ENCODE measurements at regions of chr5 and their contacts with region 1.

Region 1: DNA sequence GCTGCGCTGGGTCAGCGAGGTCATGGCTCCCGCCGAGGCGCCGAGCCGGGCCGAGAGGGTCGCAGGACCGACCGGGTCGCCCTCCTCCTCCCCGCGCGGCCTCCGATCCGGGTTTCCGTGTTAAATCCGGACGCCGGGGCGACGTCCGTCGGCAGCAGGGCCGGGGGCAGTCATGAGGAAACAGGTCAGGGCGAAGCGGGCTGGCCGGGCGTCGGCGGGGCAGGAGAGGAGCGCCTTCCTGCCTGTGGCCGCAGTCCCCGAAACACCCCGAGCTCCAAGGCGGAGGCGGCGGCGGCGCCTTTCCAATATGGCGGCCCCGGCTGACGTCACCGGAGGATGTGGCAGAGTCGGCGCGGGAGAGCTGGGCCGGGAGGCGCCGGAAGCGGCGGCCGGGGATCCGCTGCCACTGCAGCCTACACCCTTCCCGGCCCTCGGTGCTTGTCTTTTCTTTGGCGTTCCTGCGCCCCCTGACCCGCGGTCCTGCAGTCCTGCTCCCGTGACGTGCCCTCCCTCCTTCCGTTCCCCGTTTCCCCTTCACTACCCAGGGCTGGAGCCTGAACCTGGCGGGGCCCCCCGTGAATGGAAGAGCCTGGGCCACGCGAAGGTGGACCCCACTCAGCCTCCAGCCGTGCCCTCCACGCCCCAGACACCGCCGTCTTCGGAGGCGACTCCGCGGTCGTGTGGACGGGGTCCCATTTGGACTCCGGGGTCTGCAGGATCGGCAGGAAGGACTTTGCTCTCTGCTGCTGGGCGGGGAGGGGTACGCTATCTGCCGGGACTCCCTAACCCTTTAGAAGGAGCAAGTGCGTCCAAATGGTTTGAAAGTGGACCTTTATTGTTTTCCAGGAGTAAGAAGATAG is at the start of gene GOLPH3:
- DNase-seq: peak; percentile 86
- ATAC-seq: peak; percentile 89
- H3K4me3 Mint-ChIP-seq: peak within 1 kb of the TSS; percentile 96
- H3K27ac Mint-ChIP-seq: peak within 1 kb of the TSS; percentile 92
- H3K4me1 Mint-ChIP-seq: peaks cover 40% of the 10 kb centered on the region
- H3K27me3 Mint-ChIP-seq: no peaks in the 10 kb centered on the region
- CTCF ChIP-seq: no peak
- total RNA-seq, gene GOLPH3: 55.5 and 60.1 TPM in 2 replicates

Region 2: DNA sequence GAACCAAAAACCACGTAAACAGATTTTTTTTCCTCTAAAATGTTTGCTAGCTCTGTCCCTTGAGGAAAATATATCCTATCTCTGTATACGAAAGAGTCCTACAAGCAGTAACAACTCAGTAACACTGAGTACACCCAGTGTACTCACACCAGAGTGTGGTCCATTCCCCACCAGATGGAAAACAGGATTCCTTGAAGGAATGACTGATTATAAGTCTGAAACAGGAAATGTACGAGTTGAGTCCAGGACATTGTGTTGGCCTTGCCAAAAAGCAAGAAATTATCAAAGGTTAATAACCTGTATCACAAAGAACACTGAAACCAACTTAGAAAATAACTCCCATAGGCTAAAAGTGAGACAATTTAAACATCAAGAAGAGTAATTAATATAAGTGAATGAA is 20.5 kb before region 1 on chr5:
- CTCF ChIA-PET with region 1: no interaction called
- POLR2A ChIA-PET with region 1: interaction called, 4 read pairs
- intact Hi-C with region 1: loop called (anchors 2 kb)
- DNase-seq: no peak
- ATAC-seq: no peak
- H3K4me3 Mint-ChIP-seq: no peak overlapping the region
- H3K27ac Mint-ChIP-seq: no peak overlapping the region
- H3K4me1 Mint-ChIP-seq: peaks cover 51% of the 10 kb centered on the region
- H3K27me3 Mint-ChIP-seq: no peaks in the 10 kb centered on the region
- CTCF ChIP-seq: no peak

Region 3: DNA sequence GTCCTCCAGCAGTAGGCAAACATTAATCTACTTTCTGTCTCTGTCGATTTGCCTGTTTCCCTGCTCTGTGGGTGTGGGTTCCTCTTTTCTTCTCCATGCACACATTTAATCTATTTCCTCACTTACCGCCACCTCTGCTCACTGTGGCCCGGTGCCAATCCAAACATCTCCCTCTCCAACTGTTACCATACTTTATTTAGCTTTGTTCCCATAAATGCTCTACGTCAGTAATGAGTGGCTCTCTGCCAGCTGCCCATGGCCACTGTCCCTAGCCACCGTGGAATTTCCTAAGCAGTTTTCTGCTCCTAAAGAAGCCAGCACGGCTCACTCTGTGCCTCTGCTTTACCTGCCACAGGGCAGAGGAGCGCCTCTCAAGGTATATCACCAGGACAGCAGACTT is 19.4 kb after region 1 on chr5:
- CTCF ChIA-PET with region 1: no interaction called
- POLR2A ChIA-PET with region 1: interaction called, 3 read pairs
- intact Hi-C with region 1: loop called (anchors 2 kb)
- DNase-seq: no peak
- ATAC-seq: peak; percentile 77
- H3K4me3 Mint-ChIP-seq: peak overlapping the region; percentile 64
- H3K27ac Mint-ChIP-seq: peak overlapping the region; percentile 2
- H3K4me1 Mint-ChIP-seq: peaks cover 11% of the 10 kb centered on the region
- H3K27me3 Mint-ChIP-seq: no peaks in the 10 kb centered on the region
- CTCF ChIP-seq: no peak

Region 4: DNA sequence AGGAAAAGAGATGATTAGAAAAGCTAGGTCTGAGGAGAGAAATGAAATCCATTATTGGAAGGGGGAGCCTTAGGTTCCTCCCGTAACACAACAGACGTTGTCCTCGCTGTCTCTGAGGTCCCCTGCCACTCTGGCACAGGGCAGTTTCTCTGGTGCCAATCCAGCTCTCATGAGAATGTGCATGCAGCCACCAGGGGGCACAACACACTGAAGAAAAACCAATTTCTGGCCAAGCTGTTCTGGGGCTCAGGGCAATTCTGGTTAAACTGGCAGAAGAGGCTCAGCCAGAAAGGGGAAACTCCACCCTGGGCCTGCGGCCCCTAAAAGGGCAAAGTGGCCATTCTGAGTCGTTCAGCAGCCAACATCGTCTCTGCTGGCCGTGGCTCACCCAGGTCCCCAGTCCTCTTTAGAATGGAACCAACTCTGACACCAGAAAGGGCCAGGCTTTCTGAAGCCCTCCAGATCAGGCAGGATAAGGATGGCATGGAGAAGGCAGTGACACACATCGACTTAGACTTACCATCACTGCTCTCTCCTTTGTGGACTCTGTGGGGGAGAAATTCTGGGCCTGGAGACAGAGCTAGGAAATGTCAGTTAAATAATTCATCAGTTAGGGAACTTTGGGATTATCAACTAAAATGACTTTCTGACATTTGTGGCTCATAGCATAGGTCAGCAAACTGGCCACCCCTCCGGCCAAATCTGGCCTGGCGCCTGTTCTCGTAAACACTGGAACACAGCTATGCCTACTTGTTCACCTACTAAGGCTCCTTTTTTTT is 58.4 kb after region 1 on chr5:
- CTCF ChIA-PET with region 1: interaction called, 6 read pairs
- POLR2A ChIA-PET with region 1: interaction called, 4 read pairs
- intact Hi-C with region 1: loop called (anchors 2 kb)
- DNase-seq: peak; percentile 62
- ATAC-seq: peak; percentile 87
- H3K4me3 Mint-ChIP-seq: no peak overlapping the region
- H3K27ac Mint-ChIP-seq: peak overlapping the region; percentile 10
- H3K4me1 Mint-ChIP-seq: peaks cover 21% of the 10 kb centered on the region
- H3K27me3 Mint-ChIP-seq: no peaks in the 10 kb centered on the region
- CTCF ChIP-seq: no peak

Region 5: GRCh38 chr5:32444431-32445286 is 270.4 kb after region 1 on chr5 and contains the start of gene ZFR:
- CTCF ChIA-PET with region 1: no interaction called
- POLR2A ChIA-PET with region 1: interaction called, 4 read pairs
- intact Hi-C with region 1: loop called (anchors 2 kb)
- DNase-seq: peak; percentile 90
- ATAC-seq: peak; percentile 85
- H3K4me3 Mint-ChIP-seq: peak within 1 kb of the TSS; percentile 92
- H3K27ac Mint-ChIP-seq: peak within 1 kb of the TSS; percentile 92
- H3K4me1 Mint-ChIP-seq: peaks cover 60% of the 10 kb centered on the region
- H3K27me3 Mint-ChIP-seq: no peaks in the 10 kb centered on the region
- CTCF ChIP-seq: no peak
- total RNA-seq, gene ZFR: 60.2 and 64.3 TPM in 2 replicates